Heart right ventricle (tissue), 16 donors: ENCODE measurements at regions of chr20 and their contacts with region 1.

Region 1: GRCh38 chr20:12467758-12468157 is 541.0 kb upstream of the SPTLC3 start:
- DNase-seq: no peak
- ATAC-seq: no peak
- H3K4me3 ChIP-seq: no peak overlapping the region
- H3K27ac ChIP-seq: no peak overlapping the region
- H3K4me1 ChIP-seq: no peaks in the 10 kb centered on the region
- H3K27me3 ChIP-seq: no peaks in the 10 kb centered on the region
- CTCF ChIP-seq: no peak

Region 2: DNA sequence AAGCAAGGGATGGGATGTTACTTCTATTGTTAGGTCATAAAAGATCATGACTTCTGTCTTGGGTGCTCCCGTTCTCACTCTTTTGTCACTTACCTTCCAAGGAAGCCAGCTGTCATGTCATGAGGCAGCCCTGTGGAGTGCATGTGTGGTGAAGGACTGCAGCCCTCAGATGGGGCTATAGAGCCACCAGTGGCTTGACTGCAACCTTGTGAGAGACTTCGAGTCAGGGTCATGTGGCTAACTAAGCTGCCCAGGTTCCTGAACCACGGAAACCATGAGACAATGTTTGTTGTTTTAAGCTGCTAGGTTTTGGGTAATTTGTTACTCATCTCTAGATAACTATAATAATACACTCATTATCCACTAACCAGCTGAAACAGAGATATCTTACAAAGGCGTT is 73.0 kb before region 1 on chr20:
- intact Hi-C with region 1: no loop called
- DNase-seq: no peak
- ATAC-seq: no peak
- H3K4me3 ChIP-seq: no peak overlapping the region
- H3K27ac ChIP-seq: no peak overlapping the region
- H3K4me1 ChIP-seq: peaks cover 0 to 14% (median 0%) of the 10 kb centered on the region in 9 donors
- H3K27me3 ChIP-seq: no peaks in the 10 kb centered on the region
- CTCF ChIP-seq: no peak

Region 3: GRCh38 chr20:12453711-12454110 is 14.0 kb before region 1 on chr20:
- intact Hi-C with region 1: loop called in 1 of 10 experiments (anchors 1 kb)
- DNase-seq: no peak
- ATAC-seq: no peak
- H3K4me3 ChIP-seq: no peak overlapping the region
- H3K27ac ChIP-seq: no peak overlapping the region
- H3K4me1 ChIP-seq: no peaks in the 10 kb centered on the region
- H3K27me3 ChIP-seq: no peaks in the 10 kb centered on the region
- CTCF ChIP-seq: no peak

Region 4: DNA sequence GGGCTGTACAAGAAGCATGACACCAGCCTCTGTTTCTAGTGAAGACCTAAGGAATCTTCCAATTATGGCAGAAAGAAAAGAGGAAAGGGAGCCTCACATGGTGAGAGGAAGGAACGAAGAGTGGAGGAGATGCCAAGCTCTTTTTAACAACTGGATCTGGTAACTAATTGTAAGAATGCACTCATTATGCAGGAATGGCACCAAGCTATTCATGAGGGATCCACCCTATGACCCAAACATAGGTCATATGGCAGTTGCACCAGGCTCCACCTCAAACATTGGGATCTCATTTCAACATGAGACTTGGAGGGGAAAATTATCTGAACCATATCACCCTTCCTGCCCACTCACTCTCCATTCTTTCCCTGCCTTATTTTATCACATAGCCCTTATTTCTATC is 45.0 kb after region 1 on chr20:
- intact Hi-C with region 1: loop called in 1 of 10 experiments (anchors 10 kb)
- DNase-seq: no peak
- ATAC-seq: no peak
- H3K4me3 ChIP-seq: no peak overlapping the region
- H3K27ac ChIP-seq: no peak overlapping the region
- H3K4me1 ChIP-seq: no peaks in the 10 kb centered on the region
- H3K27me3 ChIP-seq: no peaks in the 10 kb centered on the region
- CTCF ChIP-seq: no peak